ENCODE measurements at regions of chr10 and their contacts with region 1.

Region 1: DNA sequence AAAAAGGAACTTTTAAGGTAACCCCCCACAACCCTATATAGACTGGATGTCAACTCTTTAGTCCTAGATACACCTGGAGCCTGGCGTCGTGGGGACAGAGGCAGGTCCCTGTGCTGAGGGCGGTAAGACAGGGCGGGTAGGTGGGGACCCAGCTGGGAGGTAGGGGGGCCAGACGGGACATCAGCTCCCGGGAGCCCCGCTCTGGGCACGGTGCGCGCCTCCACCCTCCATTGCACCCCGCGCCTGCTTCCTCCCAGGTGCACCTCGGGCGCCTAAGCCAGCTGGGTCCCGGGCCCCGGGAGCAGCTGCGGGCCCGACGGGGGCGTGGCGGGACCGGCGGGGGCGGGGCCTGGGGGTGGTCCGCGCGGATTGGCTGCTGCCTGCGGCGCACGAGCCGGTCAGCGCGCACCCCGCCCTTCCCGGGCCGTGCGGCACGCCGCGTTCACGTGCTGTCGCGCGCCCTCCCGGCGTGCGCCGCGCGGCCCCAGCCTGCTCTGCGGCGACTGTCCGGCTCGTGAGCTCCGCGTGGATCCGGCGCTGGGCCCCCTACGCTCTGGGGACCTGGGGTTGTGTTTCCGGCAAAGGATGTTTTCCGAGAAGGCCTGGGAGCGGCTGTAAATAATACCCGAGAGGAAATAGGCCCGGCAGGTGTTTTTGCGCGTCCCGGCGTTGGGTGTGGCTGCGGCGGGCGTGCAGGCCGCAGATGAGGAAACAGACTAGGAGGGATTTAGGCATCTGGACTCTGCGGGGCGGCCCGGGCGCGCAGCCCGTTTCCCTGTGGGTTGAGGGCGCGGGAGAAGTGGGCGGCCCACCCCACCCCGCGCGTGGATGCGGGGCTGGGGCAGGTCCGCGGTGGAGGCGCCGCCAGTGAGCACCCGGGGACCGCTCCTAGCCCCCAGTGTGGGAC is 39.1 kb upstream of the PFKFB3 start:
- DNase-seq: peak; percentile 93
- H3K4me3 Mint-ChIP-seq: peak overlapping the region; percentile 87
- H3K27ac Mint-ChIP-seq: peak overlapping the region; percentile 93
- H3K4me1 Mint-ChIP-seq: peaks cover 50% of the 10 kb centered on the region
- H3K27me3 Mint-ChIP-seq: no peaks in the 10 kb centered on the region

Region 2: DNA sequence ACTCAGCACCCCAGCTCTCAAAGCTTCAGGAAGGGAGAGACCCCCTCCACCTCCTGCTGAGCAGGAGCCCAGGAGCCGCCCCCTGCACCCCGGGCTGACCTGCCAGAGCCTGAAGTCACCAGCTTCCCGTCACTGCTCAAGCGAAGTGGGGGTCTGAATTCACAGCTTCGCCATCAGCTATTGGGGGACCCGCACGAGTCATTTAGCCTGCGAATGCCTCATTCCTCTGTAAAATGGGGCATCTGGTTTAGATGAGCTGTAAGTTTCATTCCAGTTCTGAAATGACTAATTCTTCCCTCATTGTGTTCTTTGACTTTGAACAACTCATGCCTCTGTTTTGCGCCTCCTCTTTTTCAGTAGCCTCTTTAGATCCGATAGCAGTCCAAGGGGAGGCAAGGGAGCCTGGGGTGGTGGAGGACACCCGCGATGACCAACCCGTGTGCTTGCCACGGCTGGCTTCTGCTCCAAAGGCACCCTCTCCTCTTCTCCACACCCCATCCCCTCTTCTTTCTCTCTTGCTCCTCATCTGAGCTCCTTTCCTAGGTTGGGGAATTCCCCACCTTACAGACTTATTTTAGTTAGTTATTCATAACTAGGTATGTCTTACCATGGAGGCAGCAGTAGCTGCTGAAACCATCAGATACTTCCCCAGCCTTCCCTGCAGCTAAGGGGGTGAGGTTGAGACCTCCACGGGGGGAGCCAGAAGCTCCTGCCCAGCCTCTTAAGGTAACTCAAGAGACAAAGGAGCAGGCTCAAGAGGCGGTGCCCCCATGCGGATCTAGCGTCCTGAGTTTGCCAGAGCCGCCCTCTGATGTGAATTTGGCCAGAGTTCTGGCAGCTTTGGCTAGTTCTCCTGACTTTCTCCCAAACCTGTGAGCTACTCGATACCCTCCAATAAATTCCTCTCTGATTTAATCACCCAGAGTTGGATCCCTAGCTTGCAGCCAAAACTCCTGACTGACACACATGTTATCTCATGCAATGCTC is 27.1 kb before region 1 on chr10:
- CTCF ChIA-PET with region 1: interaction called, 6 read pairs
- POLR2A ChIA-PET with region 1: interaction called, 12 read pairs
- DNase-seq: peak; percentile 59
- H3K4me3 Mint-ChIP-seq: peak overlapping the region; percentile 30
- H3K27ac Mint-ChIP-seq: peak overlapping the region; percentile 56
- H3K4me1 Mint-ChIP-seq: peaks cover 66% of the 10 kb centered on the region
- H3K27me3 Mint-ChIP-seq: peaks cover 27% of the 10 kb centered on the region

Region 3: GRCh38 chr10:6144406-6145165 is 19.0 kb before region 1 on chr10:
- CTCF ChIA-PET with region 1: interaction called, 3 read pairs
- POLR2A ChIA-PET with region 1: interaction called, 20 read pairs
- DNase-seq: peak; percentile 92
- H3K4me3 Mint-ChIP-seq: peak overlapping the region; percentile 84
- H3K27ac Mint-ChIP-seq: peak overlapping the region; percentile 73
- H3K4me1 Mint-ChIP-seq: peaks cover 87% of the 10 kb centered on the region
- H3K27me3 Mint-ChIP-seq: peaks cover 2% of the 10 kb centered on the region

Region 4: DNA sequence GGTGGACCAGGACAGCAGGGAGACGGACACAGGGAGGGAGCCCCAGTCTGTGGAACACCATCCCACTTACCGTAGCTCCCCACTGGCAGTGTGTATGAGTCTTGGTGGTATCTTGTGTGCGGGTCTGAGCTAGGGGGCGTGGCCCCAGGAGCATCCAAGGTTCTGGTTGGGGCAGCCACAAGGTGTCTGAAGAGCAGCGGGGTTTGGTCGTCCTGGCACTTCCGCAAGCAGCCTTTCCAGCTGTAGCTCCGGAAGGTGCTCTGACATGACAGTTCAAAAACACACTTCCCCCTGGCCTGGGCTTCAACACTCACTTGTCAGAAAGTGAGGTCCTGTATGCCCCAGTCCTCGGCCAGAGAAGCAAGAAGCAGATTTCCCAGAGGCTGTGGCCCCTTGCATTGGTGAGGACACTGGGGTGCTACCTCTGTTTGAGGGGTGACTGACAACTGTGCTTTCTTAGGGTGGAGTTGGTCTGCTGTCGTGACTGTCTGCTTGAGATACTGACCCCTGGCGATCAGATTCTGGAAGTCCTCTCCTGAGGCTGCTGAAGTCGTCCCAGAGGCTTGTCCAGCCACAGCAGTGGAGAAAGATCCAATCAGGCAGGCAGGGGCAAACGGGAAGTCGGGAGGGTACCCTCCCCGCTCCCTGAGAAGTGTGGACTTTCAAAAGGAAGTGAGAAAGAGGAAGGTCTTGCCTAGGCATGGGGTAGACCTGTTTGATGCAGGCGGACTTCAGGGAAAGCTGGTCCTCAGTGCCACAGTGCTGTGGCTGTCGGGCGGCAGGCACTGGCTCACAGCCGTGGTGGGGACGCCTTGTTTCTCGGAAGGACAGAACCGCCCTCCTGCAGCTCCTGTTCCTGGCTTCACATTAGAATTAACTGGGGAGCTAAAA is 12.3 kb before region 1 on chr10:
- CTCF ChIA-PET with region 1: interaction called, 22 read pairs
- POLR2A ChIA-PET with region 1: interaction called, 20 read pairs
- DNase-seq: peak; percentile 54
- H3K4me3 Mint-ChIP-seq: peak overlapping the region; percentile 19
- H3K27ac Mint-ChIP-seq: peak overlapping the region; percentile 51
- H3K4me1 Mint-ChIP-seq: peaks cover 47% of the 10 kb centered on the region
- H3K27me3 Mint-ChIP-seq: no peaks in the 10 kb centered on the region